Dorsolateral prefrontal cortex (tissue), 120 donors: ENCODE measurements at regions of chr13 and their contacts with region 1.

Region 1: DNA sequence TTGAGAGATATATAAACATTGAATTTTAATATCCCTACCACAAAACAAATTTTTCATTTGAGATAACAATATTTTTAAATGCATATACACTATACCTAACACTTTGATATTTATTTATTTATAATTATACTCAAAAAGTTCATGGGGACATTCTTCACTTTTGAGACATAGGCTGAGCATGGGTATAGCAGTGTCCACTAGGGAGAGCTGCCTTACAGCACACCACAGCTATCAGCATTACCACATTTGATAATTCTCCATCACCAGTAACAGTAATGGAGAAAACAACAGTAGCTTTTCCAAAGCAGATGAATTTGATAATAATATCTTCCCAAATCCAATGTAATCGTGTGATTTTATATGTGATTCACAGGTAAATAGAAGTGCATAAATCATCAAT is 626.1 kb downstream of the DACH1 start:
- DNase-seq: no peak
- H3K4me3 ChIP-seq: no peak overlapping the region
- H3K27ac ChIP-seq: no peak overlapping the region
- H3K27me3 ChIP-seq: no peaks in the 10 kb centered on the region
- CTCF ChIP-seq: peak in 47 of 56 donors; percentile 12 to 69 (median 44)

Region 2: GRCh38 chr13:71879129-71879535 is 638.2 kb after region 1 on chr13:
- intact Hi-C with region 1: loop called in 1 of 2 experiments (anchors 5 kb)
- DNase-seq: no peak
- H3K4me3 ChIP-seq: peak overlapping the region in 11 of 59 donors; percentile 4 to 35 (median 29)
- H3K27ac ChIP-seq: no peak overlapping the region
- H3K27me3 ChIP-seq: no peaks in the 10 kb centered on the region
- CTCF ChIP-seq: peak in 55 of 56 donors; percentile 23 to 76 (median 57)